ENCODE measurements at regions of chr1 and their contacts with region 1.

Region 1: DNA sequence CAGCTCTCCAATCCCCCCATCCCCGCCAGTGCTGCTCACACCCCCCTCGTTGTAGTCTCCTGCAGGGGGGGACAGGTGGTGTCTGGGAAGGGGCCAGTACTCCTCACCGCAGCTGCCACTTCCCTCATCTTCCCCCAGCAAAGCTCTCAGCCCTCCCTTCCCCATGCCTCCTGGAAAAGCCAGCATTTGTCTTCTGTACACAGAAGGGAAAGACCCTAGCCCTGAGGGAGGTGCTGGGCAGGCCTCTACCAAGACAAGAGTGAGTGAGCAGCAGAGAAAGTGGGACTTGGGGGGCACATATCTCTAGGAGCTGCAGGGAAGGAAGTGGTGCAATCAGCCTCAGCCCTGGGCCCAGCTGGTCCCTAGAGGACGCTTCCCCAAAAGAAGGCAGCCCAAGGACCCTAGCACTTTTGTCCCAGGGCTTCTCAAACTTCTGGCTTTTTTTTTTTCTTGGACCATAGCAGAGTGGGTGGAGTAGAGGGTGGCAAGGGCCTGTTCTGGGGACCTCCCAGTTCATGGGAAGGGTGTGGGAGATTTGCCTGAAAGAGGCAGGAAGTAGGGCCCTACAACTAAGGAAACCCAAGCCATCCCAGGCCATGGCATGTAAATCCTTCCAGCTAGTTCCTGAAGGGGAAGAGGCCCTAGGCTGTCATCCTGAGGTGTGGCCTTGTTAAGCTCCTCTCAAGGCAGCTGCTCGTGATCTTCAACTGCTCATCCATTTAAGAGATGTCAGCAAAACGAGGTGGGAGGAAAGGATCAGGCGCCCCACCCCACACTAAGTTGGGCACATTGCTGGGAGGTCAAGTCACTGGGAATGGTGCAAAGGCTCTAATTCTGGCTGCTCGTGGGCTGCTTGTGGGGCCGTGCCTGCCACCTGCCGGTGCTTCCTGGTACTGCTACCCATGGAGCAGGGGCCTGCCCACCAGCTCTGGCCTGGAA is 12.6 kb downstream of the ZC3H12A start:
- DNase-seq: peak; percentile 69 to 79
- ATAC-seq: peak; percentile 44 to 67
- H3K4me3 ChIP-seq: no peak overlapping the region
- H3K27ac ChIP-seq: peak overlapping the region; percentile 90 to 100
- H3K4me1 ChIP-seq: peaks cover 57% of the 10 kb centered on the region
- CTCF ChIP-seq: peak; percentile 69
- EP300 ChIP-seq: no peak
- POLR2A ChIP-seq: no peak
- RAD21 ChIP-seq: peak; percentile 73 to 77

Region 2: GRCh38 chr1:37449936-37450335 is 37.0 kb before region 1 on chr1:
- CTCF ChIA-PET with region 1: interaction called, 208 read pairs
- POLR2A ChIA-PET with region 1: interaction called, 4 read pairs
- DNase-seq: no peak
- ATAC-seq: no peak
- H3K4me3 ChIP-seq: no peak overlapping the region
- H3K27ac ChIP-seq: peak overlapping the region in 1 of 2 experiments; percentile 19; a peak in 1 of 6 replicates
- H3K4me1 ChIP-seq: peaks cover 33% of the 10 kb centered on the region
- CTCF ChIP-seq: no peak
- EP300 ChIP-seq: no peak
- POLR2A ChIP-seq: no peak
- RAD21 ChIP-seq: no peak

Region 3: GRCh38 chr1:37468037-37468436 is 18.9 kb before region 1 on chr1:
- CTCF ChIA-PET with region 1: interaction called, 208 read pairs
- POLR2A ChIA-PET with region 1: interaction called, 20 read pairs
- DNase-seq: no peak
- ATAC-seq: no peak
- H3K4me3 ChIP-seq: no peak overlapping the region
- H3K27ac ChIP-seq: peak overlapping the region; percentile 28 to 51; a peak in 4 of 6 replicates
- H3K4me1 ChIP-seq: peaks cover 76% of the 10 kb centered on the region
- CTCF ChIP-seq: no peak
- EP300 ChIP-seq: no peak
- POLR2A ChIP-seq: no peak
- RAD21 ChIP-seq: no peak

Region 4: DNA sequence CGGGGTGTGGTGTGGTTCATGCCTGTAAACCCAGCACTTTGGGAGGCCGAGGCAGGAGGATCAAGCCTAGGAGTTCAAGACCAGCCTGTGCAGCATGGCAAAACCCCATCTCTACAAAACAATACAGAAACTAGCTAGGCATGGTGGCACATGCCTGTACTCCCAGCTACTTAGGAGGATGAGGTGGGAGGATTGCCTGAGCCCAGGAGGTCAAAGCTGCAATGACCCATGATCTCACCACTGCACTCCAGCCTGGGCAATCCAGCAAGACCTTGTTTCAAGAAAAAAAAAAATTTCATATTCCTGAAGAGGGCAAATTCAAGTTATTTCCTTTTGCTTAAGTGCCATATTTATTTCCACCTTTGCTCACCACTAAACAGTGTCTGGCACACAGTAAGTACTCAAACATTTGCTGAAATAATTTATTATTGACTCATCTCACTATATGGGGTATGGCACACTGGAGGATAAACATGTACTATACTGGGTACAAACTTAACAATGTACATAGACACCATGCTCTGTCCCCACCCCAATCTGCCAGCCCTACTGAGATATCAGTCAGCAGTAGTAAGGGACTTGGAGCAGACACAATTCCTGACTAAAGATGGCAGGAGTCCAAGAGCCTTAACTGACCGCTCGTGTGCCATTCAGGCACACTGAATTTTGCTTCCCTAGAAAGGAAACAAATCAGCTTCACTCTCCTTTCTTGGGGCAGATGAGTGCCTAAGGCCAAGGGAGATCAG is 12.1 kb after region 1 on chr1:
- CTCF ChIA-PET with region 1: interaction called, 55 read pairs
- POLR2A ChIA-PET with region 1: no interaction called
- DNase-seq: peak in 1 of 2 experiments; percentile 66
- ATAC-seq: peak; percentile 59 to 93
- H3K4me3 ChIP-seq: no peak overlapping the region
- H3K27ac ChIP-seq: peak overlapping the region; percentile 68 to 80; a peak in 5 of 6 replicates
- H3K4me1 ChIP-seq: peaks cover 52% of the 10 kb centered on the region
- CTCF ChIP-seq: no peak
- EP300 ChIP-seq: no peak
- POLR2A ChIP-seq: no peak
- RAD21 ChIP-seq: no peak

Region 5: GRCh38 chr1:37514350-37515184 is 27.6 kb after region 1 on chr1 and contains the start of gene MEAF6:
- CTCF ChIA-PET with region 1: interaction called, 29 read pairs
- POLR2A ChIA-PET with region 1: interaction called, 7 read pairs
- DNase-seq: peak; percentile 63 to 72
- ATAC-seq: peak; percentile 97 to 98
- H3K4me3 ChIP-seq: peak within 1 kb of the TSS; percentile 100
- H3K27ac ChIP-seq: peak within 1 kb of the TSS; percentile 98 to 99
- H3K4me1 ChIP-seq: peaks cover 6% of the 10 kb centered on the region; the same call in 1 of the 3 replicates
- CTCF ChIP-seq: peak; percentile 75
- EP300 ChIP-seq: no peak
- POLR2A ChIP-seq: peak; percentile 78
- RAD21 ChIP-seq: peak in 1 of 2 experiments; percentile 30; a peak in 1 of 5 replicates
- polyA plus RNA-seq, gene MEAF6: 45.4 and 47.2 TPM in 2 replicates